CD4-positive, alpha-beta memory T cell (primary cell): ENCODE measurements at regions of chr10 and their contacts with region 1.

Region 1: DNA sequence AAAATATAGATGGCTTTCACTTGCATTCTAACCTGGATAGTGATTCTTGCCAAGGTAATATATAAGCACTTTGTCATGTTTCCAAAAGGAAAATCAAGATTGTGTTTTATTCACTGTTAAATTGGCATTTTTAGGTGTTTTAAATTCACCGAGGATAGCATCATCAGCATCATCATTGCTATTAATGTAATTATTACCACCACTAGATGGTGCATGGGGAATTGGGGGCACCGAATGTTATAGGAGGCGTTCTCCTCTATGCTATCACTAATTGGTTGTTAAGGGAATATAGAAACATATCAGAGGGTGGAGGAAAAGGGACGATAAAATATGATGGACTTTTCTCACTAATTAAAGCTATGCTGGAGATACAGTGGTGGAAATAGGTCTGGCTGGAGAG is 95.5 kb downstream of the CELF2 start:
- DNase-seq: peak; percentile 58 to 69 (median 67)
- H3K4me3 ChIP-seq: no peak overlapping the region
- H3K4me3 Mint-ChIP-seq: peak overlapping the region in 7 of 8 donors; percentile 22 to 77 (median 58)
- H3K27ac ChIP-seq: no peak overlapping the region
- H3K27ac Mint-ChIP-seq: peak overlapping the region; percentile 3 to 90 (median 79)
- H3K4me1 ChIP-seq: peaks cover 13% of the 10 kb centered on the region
- H3K4me1 Mint-ChIP-seq: peaks cover 18 to 33% (median 23%) of the 10 kb centered on the region in 4 donors
- H3K27me3 ChIP-seq: no peaks in the 10 kb centered on the region
- H3K27me3 Mint-ChIP-seq: no peaks in the 10 kb centered on the region

Region 2: GRCh38 chr10:10930979-10931743 is 182.0 kb before region 1 on chr10:
- CTCF ChIA-PET with region 1: no interaction called
- POLR2A ChIA-PET with region 1: no interaction called
- intact Hi-C with region 1: no loop called
- DNase-seq: no peak
- H3K4me3 ChIP-seq: no peak overlapping the region
- H3K4me3 Mint-ChIP-seq: no peak overlapping the region
- H3K27ac ChIP-seq: no peak overlapping the region
- H3K27ac Mint-ChIP-seq: no peak overlapping the region
- H3K4me1 ChIP-seq: no peaks in the 10 kb centered on the region
- H3K4me1 Mint-ChIP-seq: no peaks in the 10 kb centered on the region
- H3K27me3 ChIP-seq: no peaks in the 10 kb centered on the region
- H3K27me3 Mint-ChIP-seq: peaks cover 0 to 3% of the 10 kb centered on the region in 2 donors

Region 3: DNA sequence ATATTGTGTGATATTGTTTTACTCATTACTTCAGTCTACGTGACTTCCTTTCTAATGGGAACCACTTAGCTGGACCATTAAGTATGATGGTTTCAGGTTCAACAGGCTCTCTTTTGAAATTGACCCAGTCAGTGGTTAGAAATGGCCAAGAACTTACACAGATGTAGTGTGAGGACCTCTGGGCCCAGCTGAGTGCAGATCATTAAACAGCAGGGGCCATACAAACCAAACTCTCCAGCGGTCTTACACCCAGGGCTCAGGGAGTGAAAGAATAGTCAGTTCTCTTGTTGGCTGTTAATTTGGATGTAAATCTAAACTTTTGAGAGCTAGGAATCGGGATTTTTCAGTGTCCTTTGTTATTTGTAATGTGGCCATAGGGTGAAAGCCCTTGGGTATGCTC is 11.8 kb after region 1 on chr10:
- CTCF ChIA-PET with region 1: interaction called, 19 read pairs
- POLR2A ChIA-PET with region 1: no interaction called
- intact Hi-C with region 1: no loop called
- DNase-seq: no peak
- H3K4me3 ChIP-seq: no peak overlapping the region
- H3K4me3 Mint-ChIP-seq: no peak overlapping the region
- H3K27ac ChIP-seq: no peak overlapping the region
- H3K27ac Mint-ChIP-seq: no peak overlapping the region
- H3K4me1 ChIP-seq: no peaks in the 10 kb centered on the region
- H3K4me1 Mint-ChIP-seq: peaks cover 1 to 9% (median 9%) of the 10 kb centered on the region in 4 donors
- H3K27me3 ChIP-seq: no peaks in the 10 kb centered on the region
- H3K27me3 Mint-ChIP-seq: no peaks in the 10 kb centered on the region

Region 4: DNA sequence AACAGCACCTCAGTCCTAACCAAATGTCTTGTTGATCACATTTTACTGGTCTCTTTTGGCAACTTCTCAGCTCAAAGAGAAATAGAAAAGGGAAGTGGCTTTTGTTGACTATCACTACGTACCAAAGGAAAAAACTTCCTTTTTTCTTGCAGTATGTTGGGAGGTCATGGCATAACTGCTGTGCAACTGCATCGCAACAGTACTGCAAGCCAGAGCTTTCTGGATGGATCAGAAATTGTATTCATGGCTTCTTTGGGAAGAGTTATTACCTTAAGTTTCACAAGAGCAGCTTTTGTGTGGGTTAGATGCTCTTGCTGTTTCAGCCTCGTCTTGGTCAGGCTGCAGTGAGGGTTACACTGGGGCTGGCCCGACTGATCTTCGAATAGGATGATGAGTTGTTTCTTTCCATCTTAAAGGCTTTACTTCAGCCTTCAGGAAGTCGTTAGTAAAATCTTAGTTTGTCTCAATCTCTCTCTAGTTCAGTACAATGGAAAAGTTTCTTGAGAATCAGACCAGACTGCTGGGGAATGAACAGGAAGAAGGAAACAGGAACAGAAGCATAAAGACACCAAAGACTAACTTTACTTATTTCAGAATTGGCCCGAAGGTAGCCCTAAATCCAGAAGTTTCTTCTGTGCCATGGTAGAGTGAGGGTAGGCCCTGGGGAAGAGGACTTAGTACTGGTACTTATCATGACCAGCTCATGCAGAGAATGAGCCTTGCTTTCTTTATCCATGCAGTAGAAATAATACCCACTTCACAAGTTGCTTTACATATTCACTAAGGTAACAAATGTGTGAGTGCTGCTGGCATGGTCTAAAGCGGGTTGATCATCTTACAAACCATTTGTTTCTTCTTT is 58.1 kb after region 1 on chr10:
- CTCF ChIA-PET with region 1: interaction called, 39 read pairs
- POLR2A ChIA-PET with region 1: interaction called, 88 read pairs
- intact Hi-C with region 1: loop called (anchors 1 kb)
- DNase-seq: peak in 1 of 5 donors; percentile 66
- H3K4me3 ChIP-seq: peak overlapping the region; percentile 50 to 93
- H3K4me3 Mint-ChIP-seq: no peak overlapping the region
- H3K27ac ChIP-seq: peak overlapping the region; percentile 96
- H3K27ac Mint-ChIP-seq: peak overlapping the region in 1 of 7 donors; percentile 96
- H3K4me1 ChIP-seq: peaks cover 82% of the 10 kb centered on the region
- H3K4me1 Mint-ChIP-seq: peaks cover 0 to 40% (median 21%) of the 10 kb centered on the region in 4 donors
- H3K27me3 ChIP-seq: no peaks in the 10 kb centered on the region
- H3K27me3 Mint-ChIP-seq: no peaks in the 10 kb centered on the region

Region 5: DNA sequence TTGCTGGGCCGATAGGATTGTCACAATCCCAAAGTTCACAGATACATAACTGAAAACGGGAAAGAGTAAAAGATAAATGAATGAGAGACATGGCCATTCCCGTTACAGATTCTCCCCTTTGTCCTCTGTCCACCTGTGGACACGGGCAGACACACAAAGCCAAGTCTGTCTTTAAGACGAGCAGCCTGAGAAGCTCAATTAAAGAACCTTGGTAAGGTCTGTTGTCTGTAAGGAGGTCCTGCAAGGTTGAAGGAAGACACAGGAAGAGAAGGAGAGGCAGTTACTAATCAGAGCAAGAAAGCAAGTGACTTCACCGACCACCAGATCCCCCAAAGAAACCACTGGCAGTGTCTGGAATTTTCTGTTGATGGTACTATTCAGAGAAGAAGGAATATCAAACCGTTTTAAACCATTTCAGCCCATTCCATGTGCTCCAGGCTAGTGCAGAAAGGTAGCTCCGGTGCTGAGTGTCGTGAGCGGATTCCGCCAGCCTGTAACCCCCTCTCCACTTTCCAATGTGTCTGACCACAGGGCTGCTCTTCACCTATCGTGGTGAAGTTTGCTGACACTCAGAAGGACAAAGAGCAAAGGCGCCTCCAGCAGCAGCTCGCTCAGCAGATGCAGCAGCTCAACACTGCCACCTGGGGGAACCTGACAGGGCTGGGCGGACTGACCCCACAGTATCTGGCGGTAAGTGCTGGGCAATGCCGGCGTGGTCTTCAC is 157.1 kb after region 1 on chr10:
- CTCF ChIA-PET with region 1: interaction called, 61 read pairs
- POLR2A ChIA-PET with region 1: interaction called, 8 read pairs
- intact Hi-C with region 1: loop called (anchors 1 kb)
- DNase-seq: peak; percentile 55 to 66 (median 65)
- H3K4me3 ChIP-seq: no peak overlapping the region
- H3K4me3 Mint-ChIP-seq: peak overlapping the region; percentile 2 to 44 (median 11)
- H3K27ac ChIP-seq: no peak overlapping the region
- H3K27ac Mint-ChIP-seq: peak overlapping the region; percentile 48 to 89 (median 82)
- H3K4me1 ChIP-seq: peaks cover 41% of the 10 kb centered on the region
- H3K4me1 Mint-ChIP-seq: peaks cover 45 to 84% (median 65%) of the 10 kb centered on the region in 4 donors
- H3K27me3 ChIP-seq: no peaks in the 10 kb centered on the region
- H3K27me3 Mint-ChIP-seq: no peaks in the 10 kb centered on the region